ENCODE measurements at regions of chr14 and their contacts with region 1.

Region 1: DNA sequence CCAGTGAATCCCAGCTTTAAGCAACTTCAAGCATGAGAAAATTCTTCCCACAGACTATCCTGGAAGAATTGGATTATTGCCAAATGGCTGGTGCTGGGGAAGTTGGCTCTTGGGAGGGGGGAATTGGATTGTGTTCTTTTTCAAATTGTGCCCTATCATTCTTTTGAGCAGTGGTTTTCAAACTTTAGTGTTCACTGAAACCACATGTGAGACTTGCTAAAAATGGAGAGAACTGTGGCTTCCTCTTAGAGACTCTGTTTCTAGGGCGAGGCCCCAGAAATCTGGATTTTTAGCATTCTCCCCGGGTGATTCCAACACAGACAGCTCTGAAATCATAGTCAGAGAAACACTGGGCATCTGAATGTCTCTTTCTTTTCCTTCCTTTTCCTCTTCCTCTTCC is 14.3 kb upstream of the OTUB2 start:
- DNase-seq: peak in 7 of 9 donors; percentile 30 to 57 (median 49)
- ATAC-seq: peak; percentile 81
- H3K4me3 ChIP-seq: no peak overlapping the region
- H3K4me3 Mint-ChIP-seq: peak overlapping the region; percentile 7 to 81 (median 54)
- H3K27ac ChIP-seq: no peak overlapping the region
- H3K27ac Mint-ChIP-seq: peak overlapping the region in 6 of 9 donors; percentile 10 to 83 (median 44)
- H3K4me1 ChIP-seq: peaks cover 15 to 17% of the 10 kb centered on the region in 2 donors
- H3K4me1 Mint-ChIP-seq: peaks cover 13 to 57% (median 36%) of the 10 kb centered on the region in 7 donors
- H3K27me3 ChIP-seq: no peaks in the 10 kb centered on the region
- H3K27me3 Mint-ChIP-seq: peaks cover 0 to 4% (median 0%) of the 10 kb centered on the region in 5 donors

Region 2: GRCh38 chr14:93772263-93772662 is 239.5 kb before region 1 on chr14:
- CTCF ChIA-PET with region 1: no interaction called
- POLR2A ChIA-PET with region 1: no interaction called
- intact Hi-C with region 1: no loop called
- DNase-seq: no peak
- ATAC-seq: no peak
- H3K4me3 ChIP-seq: no peak overlapping the region
- H3K4me3 Mint-ChIP-seq: no peak overlapping the region
- H3K27ac ChIP-seq: no peak overlapping the region
- H3K27ac Mint-ChIP-seq: no peak overlapping the region
- H3K4me1 ChIP-seq: no peaks in the 10 kb centered on the region
- H3K4me1 Mint-ChIP-seq: no peaks in the 10 kb centered on the region
- H3K27me3 ChIP-seq: no peaks in the 10 kb centered on the region
- H3K27me3 Mint-ChIP-seq: peaks cover 0 to 31% (median 8%) of the 10 kb centered on the region in 5 donors

Region 3: DNA sequence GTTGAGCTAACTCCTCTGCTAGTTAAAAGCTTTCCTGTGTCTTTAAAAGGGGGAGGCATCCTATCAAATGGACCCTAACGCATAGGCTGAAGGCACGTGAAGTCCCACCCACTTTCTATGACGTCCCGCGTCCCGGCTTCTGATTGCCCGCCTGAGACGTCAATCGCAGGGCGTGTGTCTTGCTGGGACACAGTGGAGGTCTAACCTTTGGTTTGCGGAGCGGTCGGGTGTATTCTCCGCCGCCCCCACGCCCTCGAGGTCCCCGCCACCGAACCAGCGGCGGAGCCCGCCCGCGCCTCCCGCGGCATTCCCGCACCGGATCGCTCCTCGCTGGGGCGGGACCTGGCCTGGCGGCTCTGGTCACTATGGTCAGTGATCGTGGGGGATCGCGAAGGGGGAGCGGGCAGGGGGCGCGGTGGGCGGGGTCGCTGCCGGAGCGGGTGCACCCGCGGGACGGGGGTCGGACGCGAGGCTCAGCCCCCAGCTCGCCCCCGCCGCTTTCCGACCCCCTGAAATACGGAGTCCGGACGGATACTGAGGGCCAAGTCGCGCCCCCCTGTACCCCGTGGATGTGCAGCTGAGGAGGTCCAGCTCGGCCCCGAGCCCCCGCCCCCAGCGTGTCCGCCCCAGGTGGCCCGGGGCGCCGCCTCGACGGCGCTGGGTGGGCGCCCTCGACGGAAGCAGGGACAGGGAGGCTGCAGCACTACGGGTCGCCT is 14.5 kb after region 1 on chr14 and contains the start of gene OTUB2:
- CTCF ChIA-PET with region 1: no interaction called
- POLR2A ChIA-PET with region 1: no interaction called
- intact Hi-C with region 1: loop called in 1 of 2 experiments (anchors 2 kb)
- DNase-seq: peak; percentile 89 to 98 (median 96)
- ATAC-seq: peak; percentile 100
- H3K4me3 ChIP-seq: peak within 1 kb of the TSS; percentile 51
- H3K4me3 Mint-ChIP-seq: peak within 1 kb of the TSS; percentile 72 to 90 (median 82)
- H3K27ac ChIP-seq: no peak within 1 kb of the TSS
- H3K27ac Mint-ChIP-seq: peak within 1 kb of the TSS in 7 of 9 donors; percentile 20 to 75 (median 66)
- H3K4me1 ChIP-seq: peaks cover 5 to 12% of the 10 kb centered on the region in 2 donors
- H3K4me1 Mint-ChIP-seq: peaks cover 14 to 43% (median 18%) of the 10 kb centered on the region in 7 donors
- H3K27me3 ChIP-seq: no peaks in the 10 kb centered on the region
- H3K27me3 Mint-ChIP-seq: peaks cover 0 to 2% (median 0%) of the 10 kb centered on the region in 5 donors
- total RNA-seq, gene OTUB2: 0.11 to 2.5 (median 0.63) TPM in 4 of 5 experiments, not detected in the other